Activated T-helper 2 cell treated with anti-CD3 and anti-CD28 coated beads, Interferon-gamma antibody, Interleukin-2, Interleukin-4, amounts not matched to agents 10 μg/mL and 5 μg/mL and 100 μg/mL, durations not matched to agents 14 hours and 24 hours and 36 hours (primary cell): ENCODE measurements at regions of chr9 and their contacts with region 1.

Region 1: GRCh38 chr9:104991144-104991953 is 63.4 kb upstream of the ABCA1 start:
- DNase-seq: peak; percentile 74
- H3K4me3 Mint-ChIP-seq: peak overlapping the region; percentile 75
- H3K27ac Mint-ChIP-seq: peak overlapping the region; percentile 52
- H3K4me1 Mint-ChIP-seq: peaks cover 19% of the 10 kb centered on the region
- H3K27me3 Mint-ChIP-seq: peaks cover 70% of the 10 kb centered on the region

Region 2: DNA sequence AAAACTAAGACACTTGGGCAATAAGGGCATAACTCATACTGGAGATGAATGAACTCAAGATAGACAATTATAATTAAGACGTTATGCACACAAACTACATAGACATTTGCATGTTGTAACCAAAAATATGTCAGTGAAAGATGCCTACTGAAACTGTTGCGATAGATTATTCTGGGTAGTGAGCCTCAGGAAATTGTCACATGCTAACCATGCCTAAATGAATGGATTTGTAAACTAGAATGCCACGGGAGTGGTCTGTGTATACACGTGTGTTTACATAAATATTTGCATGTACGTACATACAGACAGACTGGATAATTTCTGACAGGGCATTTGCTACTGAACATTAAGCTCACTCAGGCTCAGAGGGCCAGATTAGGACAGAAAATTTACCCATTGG is 226.2 kb before region 1 on chr9:
- intact Hi-C with region 1: loop called (anchors 10 kb)
- DNase-seq: no peak
- H3K4me3 Mint-ChIP-seq: peak overlapping the region; percentile 24
- H3K27ac Mint-ChIP-seq: no peak overlapping the region
- H3K4me1 Mint-ChIP-seq: no peaks in the 10 kb centered on the region
- H3K27me3 Mint-ChIP-seq: peaks cover 10% of the 10 kb centered on the region

Region 3: GRCh38 chr9:104927912-104928740 is 63.2 kb before region 1 on chr9 and contains the start of gene ABCA1:
- intact Hi-C with region 1: loop called (anchors 10 kb)
- DNase-seq: peak; percentile 38
- H3K4me3 Mint-ChIP-seq: peak within 1 kb of the TSS; percentile 72
- H3K27ac Mint-ChIP-seq: no peak within 1 kb of the TSS
- H3K4me1 Mint-ChIP-seq: peaks cover 5% of the 10 kb centered on the region
- H3K27me3 Mint-ChIP-seq: peaks cover 54% of the 10 kb centered on the region
- total RNA-seq, gene ABCA1: 0.14 TPM in 1 of 2 replicates, not detected in the other

Region 4: DNA sequence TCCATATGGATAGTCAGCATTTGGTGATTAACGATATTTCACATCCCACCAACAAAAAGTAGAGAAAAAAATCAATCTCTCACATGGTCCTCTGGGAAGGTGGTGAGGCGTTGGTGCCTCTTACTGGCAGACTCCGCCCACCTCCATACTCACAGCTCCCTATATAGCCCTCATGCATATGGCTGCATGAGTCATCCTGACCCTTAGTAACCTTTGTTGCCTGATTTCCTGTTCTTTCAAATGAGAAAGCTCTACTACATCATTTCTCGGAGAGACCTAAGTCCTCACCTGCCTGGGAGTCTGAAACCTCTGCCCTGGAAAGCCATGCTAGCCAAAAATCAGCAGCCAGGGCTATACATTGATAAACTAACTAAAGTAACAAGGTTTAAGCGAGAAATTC is 30.1 kb before region 1 on chr9:
- intact Hi-C with region 1: loop called (anchors 1 kb)
- DNase-seq: peak; percentile 16
- H3K4me3 Mint-ChIP-seq: no peak overlapping the region
- H3K27ac Mint-ChIP-seq: peak overlapping the region; percentile 44
- H3K4me1 Mint-ChIP-seq: peaks cover 11% of the 10 kb centered on the region
- H3K27me3 Mint-ChIP-seq: peaks cover 10% of the 10 kb centered on the region

Region 5: GRCh38 chr9:104968025-104968982 is 23.0 kb before region 1 on chr9:
- intact Hi-C with region 1: loop called (anchors 2 kb)
- DNase-seq: peak; percentile 75
- H3K4me3 Mint-ChIP-seq: peak overlapping the region; percentile 83
- H3K27ac Mint-ChIP-seq: peak overlapping the region; percentile 8
- H3K4me1 Mint-ChIP-seq: peaks cover 10% of the 10 kb centered on the region
- H3K27me3 Mint-ChIP-seq: peaks cover 28% of the 10 kb centered on the region

Region 6: DNA sequence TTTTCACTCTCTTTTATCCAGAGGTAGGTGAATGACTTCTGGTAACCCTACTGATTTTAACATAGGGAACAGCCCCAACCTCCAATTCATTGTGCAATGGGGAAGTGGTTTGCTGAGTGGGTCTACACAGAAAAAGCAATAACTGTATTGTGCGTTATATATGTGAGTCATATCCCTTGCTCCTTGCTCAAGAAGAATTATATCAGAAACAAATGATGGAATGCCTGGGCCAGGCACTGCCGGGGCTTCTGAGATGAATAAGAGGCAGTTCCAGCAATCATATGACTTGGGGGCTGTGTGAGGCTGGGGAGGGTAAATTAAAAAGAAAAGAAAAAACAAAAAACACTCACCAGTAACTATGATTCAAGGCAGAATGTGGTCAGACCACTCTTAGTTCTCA is 15.8 kb after region 1 on chr9:
- intact Hi-C with region 1: no loop called
- DNase-seq: no peak
- H3K4me3 Mint-ChIP-seq: no peak overlapping the region
- H3K27ac Mint-ChIP-seq: no peak overlapping the region
- H3K4me1 Mint-ChIP-seq: no peaks in the 10 kb centered on the region
- H3K27me3 Mint-ChIP-seq: peaks cover 18% of the 10 kb centered on the region

Region 7: GRCh38 chr9:105064315-105065097 is 73.2 kb after region 1 on chr9:
- intact Hi-C with region 1: no loop called
- DNase-seq: no peak
- H3K4me3 Mint-ChIP-seq: no peak overlapping the region
- H3K27ac Mint-ChIP-seq: no peak overlapping the region
- H3K4me1 Mint-ChIP-seq: no peaks in the 10 kb centered on the region
- H3K27me3 Mint-ChIP-seq: no peaks in the 10 kb centered on the region

Region 8: GRCh38 chr9:105359892-105360291 is 368.5 kb after region 1 on chr9:
- intact Hi-C with region 1: loop called (anchors 1 kb)
- DNase-seq: peak; percentile 18
- H3K4me3 Mint-ChIP-seq: no peak overlapping the region
- H3K27ac Mint-ChIP-seq: no peak overlapping the region
- H3K4me1 Mint-ChIP-seq: peaks cover 25% of the 10 kb centered on the region
- H3K27me3 Mint-ChIP-seq: peaks cover 35% of the 10 kb centered on the region

Region 9: DNA sequence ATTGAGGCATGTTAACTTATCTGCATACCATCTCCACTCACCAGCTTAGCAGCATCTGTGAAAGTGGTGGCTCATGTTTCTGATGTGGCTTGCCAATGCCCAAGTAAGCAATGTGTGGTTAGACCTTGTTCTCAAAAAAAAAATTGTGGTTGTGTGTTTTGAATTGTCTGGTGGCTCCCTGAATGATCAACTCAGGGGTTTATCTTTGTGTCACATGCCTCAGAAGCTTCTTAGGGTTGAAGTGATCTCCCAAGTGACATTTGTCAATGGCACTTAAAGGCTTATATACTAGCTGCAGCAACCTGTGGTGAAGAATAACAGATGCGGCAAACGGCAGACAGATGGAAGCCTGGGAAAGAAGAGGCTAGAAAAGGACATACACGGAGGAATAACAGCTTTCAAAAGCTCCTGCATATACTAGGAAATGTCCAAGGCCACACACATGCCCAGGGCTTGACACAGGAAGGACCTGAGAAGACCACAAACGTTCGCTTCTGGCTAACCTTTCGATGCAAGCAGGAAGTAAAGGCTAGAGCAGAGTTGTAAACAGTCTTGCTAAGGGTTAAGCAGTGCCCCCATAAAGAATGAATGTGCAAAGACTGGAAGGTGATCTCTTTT is 414.3 kb after region 1 on chr9:
- intact Hi-C with region 1: loop called (anchors 1 kb)
- DNase-seq: peak; percentile 69
- H3K4me3 Mint-ChIP-seq: peak overlapping the region; percentile 31
- H3K27ac Mint-ChIP-seq: no peak overlapping the region
- H3K4me1 Mint-ChIP-seq: peaks cover 24% of the 10 kb centered on the region
- H3K27me3 Mint-ChIP-seq: peaks cover 58% of the 10 kb centered on the region